ENCODE measurements at regions of chr11 and their contacts with region 1.

Region 1: GRCh38 chr11:69449320-69450063 is 32.0 kb upstream of the LINC01488 start:
- DNase-seq: peak; percentile 92
- H3K4me3 ChIP-seq: no peak overlapping the region
- H3K27ac ChIP-seq: peak overlapping the region; percentile 98
- H3K4me1 ChIP-seq: peaks cover 38% of the 10 kb centered on the region
- H3K27me3 ChIP-seq: no peaks in the 10 kb centered on the region
- CTCF ChIP-seq: no peak
- POLR2A ChIP-seq: peak; percentile 84

Region 2: DNA sequence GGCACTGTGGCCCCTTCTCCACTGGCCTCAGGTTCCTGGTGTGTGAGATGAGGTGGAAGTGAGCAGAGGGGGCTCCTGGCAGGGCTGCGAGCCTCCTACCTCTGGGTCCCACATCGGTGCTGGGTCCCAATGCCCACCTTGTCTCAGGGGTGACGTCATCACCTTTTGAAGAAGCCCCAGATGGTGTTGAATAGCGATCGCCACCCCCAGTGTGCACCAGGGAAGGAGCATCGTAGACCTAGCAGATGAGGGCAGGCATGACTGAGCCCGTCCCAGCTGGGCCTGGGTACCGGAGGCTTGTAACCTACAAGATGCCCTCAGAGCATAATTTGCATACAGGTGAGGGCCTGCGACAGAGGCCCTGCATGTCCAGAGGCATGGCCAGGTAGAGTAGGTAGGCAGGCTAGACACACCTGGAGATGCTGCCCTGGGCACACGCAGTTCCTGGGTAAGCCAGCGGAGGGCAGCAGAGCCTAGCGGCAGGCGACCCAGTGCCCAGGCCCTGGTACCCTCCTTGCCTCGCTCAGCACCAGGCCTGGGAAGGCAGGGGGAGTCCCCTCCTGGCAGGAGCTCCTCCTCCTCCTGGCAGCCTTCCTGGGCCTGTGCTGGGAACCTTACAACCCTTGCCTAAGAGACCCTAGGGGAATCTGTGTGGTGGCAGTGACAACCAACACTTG is 348.2 kb before region 1 on chr11:
- CTCF ChIA-PET with region 1: interaction called, 4 read pairs
- POLR2A ChIA-PET with region 1: no interaction called
- dilution Hi-C with region 1: no loop called
- intact Hi-C with region 1: loop called (anchors 2 kb)
- DNase-seq: peak; percentile 71
- H3K4me3 ChIP-seq: no peak overlapping the region
- H3K27ac ChIP-seq: no peak overlapping the region
- H3K4me1 ChIP-seq: peaks cover 5% of the 10 kb centered on the region
- H3K27me3 ChIP-seq: peaks cover 0 to 2% of the 10 kb centered on the region in 2 experiments
- CTCF ChIP-seq: peak; percentile 98 to 99
- POLR2A ChIP-seq: peak; percentile 37

Region 3: GRCh38 chr11:69311767-69312385 is 137.6 kb before region 1 on chr11:
- CTCF ChIA-PET with region 1: no interaction called
- POLR2A ChIA-PET with region 1: no interaction called
- dilution Hi-C with region 1: no loop called
- intact Hi-C with region 1: loop called (anchors 1 kb)
- DNase-seq: peak; percentile 83
- H3K4me3 ChIP-seq: no peak overlapping the region
- H3K27ac ChIP-seq: peak overlapping the region; percentile 62
- H3K4me1 ChIP-seq: peaks cover 25% of the 10 kb centered on the region
- H3K27me3 ChIP-seq: no peaks in the 10 kb centered on the region
- CTCF ChIP-seq: no peak
- POLR2A ChIP-seq: no peak

Region 4: DNA sequence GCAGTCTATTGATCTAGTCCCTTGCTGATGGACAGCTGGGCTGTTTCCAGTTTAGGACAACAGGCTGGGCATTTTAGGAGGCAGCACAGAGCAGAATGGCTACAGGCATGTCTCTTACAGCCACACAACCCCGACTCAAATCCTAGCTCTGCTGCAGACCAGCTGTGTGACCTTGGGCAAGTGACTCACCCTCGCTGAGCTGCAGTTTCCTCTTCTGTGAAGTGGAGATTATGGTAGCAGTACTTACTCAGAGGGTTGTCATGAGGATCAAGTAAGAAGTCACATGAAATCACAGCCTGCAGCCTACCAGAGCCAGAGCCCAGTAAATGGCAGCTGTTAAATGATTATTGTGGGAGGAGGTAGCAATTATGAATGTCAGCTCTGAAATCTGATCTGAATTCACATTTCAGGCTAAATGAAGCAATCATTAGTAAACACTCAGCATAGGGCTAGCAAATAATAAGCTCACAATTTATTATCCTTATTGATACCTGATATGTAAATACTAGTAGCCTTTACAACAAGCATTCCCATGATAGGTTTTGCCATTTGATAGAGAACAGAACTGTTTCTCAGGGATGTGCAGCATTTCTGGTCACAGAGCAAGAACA is 96.7 kb before region 1 on chr11:
- CTCF ChIA-PET with region 1: interaction called, 7 read pairs
- POLR2A ChIA-PET with region 1: interaction called, 3 read pairs
- dilution Hi-C with region 1: no loop called
- intact Hi-C with region 1: loop called (anchors 1 kb)
- DNase-seq: peak; percentile 96
- H3K4me3 ChIP-seq: no peak overlapping the region
- H3K27ac ChIP-seq: peak overlapping the region; percentile 90
- H3K4me1 ChIP-seq: peaks cover 47% of the 10 kb centered on the region
- H3K27me3 ChIP-seq: no peaks in the 10 kb centered on the region
- CTCF ChIP-seq: no peak
- POLR2A ChIP-seq: peak; percentile 73

Region 5: GRCh38 chr11:69362316-69362715 is 87.2 kb before region 1 on chr11:
- CTCF ChIA-PET with region 1: interaction called, 3 read pairs
- POLR2A ChIA-PET with region 1: no interaction called
- dilution Hi-C with region 1: no loop called
- intact Hi-C with region 1: loop called (anchors 1 kb)
- DNase-seq: no peak
- H3K4me3 ChIP-seq: no peak overlapping the region
- H3K27ac ChIP-seq: no peak overlapping the region
- H3K4me1 ChIP-seq: peaks cover 21% of the 10 kb centered on the region
- H3K27me3 ChIP-seq: no peaks in the 10 kb centered on the region
- CTCF ChIP-seq: no peak
- POLR2A ChIP-seq: no peak

Region 6: DNA sequence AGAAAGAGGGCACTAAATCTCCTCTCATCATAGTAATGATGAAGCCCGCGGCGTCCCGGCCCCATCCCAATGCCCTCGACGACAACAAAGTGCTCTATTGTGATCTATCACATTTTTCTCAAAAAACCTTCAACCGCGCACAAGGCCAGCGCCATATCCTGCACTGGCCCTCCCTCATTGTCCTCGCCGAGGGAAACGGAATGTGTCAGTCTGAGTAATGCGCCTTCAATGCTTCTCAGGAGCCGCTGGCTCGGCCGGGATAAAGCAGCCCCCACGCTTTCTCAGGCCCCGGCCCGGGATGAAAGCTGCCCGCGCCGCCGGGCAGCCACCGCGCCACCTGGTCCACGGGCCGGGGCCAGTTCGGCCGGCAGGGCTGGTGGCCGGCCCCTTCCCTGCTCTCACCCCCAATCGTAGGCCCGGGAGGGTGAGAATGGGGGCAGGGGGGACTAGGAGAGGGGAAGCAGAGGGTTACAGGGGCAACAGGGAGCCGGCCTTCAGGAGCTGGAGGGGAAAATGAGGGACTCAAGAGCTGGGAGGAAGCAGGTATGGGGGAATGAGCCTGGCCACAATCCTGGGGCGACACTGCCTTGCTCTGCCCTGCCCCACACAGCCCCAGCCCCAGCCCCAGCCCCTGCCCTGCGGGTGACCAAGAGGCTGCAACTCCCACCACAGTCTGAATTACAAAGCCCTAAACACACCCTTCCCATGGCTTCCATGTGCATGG is 22.0 kb after region 1 on chr11:
- CTCF ChIA-PET with region 1: interaction called, 4 read pairs
- POLR2A ChIA-PET with region 1: interaction called, 3 read pairs
- dilution Hi-C with region 1: no loop called
- intact Hi-C with region 1: loop called (anchors 1 kb)
- DNase-seq: peak; percentile 74
- H3K4me3 ChIP-seq: no peak overlapping the region
- H3K27ac ChIP-seq: peak overlapping the region; percentile 56
- H3K4me1 ChIP-seq: peaks cover 7% of the 10 kb centered on the region
- H3K27me3 ChIP-seq: no peaks in the 10 kb centered on the region
- CTCF ChIP-seq: no peak
- POLR2A ChIP-seq: no peak

Region 7: DNA sequence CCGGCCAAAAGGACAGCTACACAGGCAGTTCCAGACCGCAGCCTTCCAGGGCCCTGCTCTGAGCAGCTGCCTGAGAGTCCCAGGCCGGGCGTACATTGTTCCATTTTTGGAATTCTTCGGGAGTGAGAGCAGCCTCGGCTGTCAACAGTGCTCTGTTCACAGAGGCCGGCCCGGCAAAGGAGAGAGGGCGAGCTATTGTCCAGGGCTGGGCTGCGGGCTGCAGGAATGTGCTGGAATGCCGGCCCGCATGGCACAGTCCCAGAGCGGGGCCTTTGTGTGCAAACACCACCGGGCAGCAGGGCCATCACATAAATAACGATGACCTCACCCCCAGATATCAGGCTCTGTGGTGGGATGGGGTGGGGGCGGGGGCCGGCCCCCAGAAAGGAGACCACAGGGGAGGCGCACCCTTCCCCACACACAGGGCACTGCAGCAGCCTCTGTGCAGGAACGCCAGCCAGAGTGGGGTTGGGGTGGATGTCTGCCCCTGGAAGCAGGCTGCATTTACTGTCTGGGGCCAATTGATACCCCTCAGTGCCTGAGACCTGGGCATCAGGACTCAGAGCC is 47.8 kb after region 1 on chr11:
- CTCF ChIA-PET with region 1: interaction called, 3 read pairs
- POLR2A ChIA-PET with region 1: interaction called, 8 read pairs
- dilution Hi-C with region 1: no loop called
- intact Hi-C with region 1: loop called (anchors 1 kb)
- DNase-seq: peak; percentile 83
- H3K4me3 ChIP-seq: no peak overlapping the region
- H3K27ac ChIP-seq: peak overlapping the region; percentile 57
- H3K4me1 ChIP-seq: peaks cover 29% of the 10 kb centered on the region
- H3K27me3 ChIP-seq: no peaks in the 10 kb centered on the region
- CTCF ChIP-seq: no peak
- POLR2A ChIP-seq: no peak